ENCODE measurements at regions of chr13 and their contacts with region 1.

Region 1: DNA sequence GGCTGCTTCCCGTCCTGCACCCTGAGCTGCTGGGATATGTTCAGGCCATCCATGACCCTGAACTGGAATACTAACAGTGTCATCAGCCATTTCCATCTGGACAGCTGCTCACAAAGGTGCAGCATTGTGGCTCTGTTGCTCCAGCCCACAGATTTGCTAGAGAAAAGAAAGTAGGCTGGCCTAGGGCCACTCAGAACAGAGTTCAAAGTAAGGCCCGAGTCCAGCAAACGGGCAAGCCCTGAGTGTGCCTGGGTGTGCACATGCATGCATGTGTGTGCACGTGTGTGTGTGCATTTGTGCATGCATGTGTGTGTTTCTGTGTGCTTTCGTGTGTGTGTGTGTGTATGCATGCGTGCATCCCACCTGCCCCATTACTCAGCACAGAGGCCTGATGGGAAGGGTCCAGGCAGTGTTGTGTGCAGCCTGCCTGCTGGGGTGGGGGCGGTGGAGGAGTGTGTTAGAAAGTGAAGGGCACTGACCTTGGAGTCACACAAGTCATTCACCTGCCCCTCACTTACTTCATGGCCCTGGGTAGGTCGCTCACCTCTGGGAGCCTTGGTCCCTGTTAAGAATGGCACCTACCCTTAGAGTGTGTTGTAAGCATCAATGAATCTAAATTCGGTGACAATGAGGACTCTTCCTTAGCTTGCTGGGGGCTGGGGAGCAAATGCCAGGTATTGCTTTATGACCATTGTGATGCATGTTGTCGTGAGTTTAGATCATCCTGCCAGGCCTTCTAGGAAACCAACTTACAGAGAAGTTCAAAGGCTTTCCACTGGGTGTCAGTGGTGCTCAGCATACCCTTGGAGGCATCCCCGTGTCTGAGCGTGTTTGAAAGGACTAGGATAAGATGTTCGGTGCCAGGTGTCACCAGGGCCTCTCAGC is 53.2 kb downstream of the GPR12 start:
- DNase-seq: peak; percentile 74
- ATAC-seq: peak; percentile 78
- H3K4me3 Mint-ChIP-seq: no peak overlapping the region
- H3K27ac Mint-ChIP-seq: no peak overlapping the region
- H3K4me1 Mint-ChIP-seq: peaks cover 6% of the 10 kb centered on the region
- H3K27me3 Mint-ChIP-seq: peaks cover 2% of the 10 kb centered on the region

Region 2: GRCh38 chr13:26721251-26722121 is 14.1 kb after region 1 on chr13:
- CTCF ChIA-PET with region 1: interaction called, 18 read pairs
- POLR2A ChIA-PET with region 1: no interaction called
- DNase-seq: peak; percentile 77
- ATAC-seq: peak; percentile 90
- H3K4me3 Mint-ChIP-seq: peak overlapping the region; percentile 70
- H3K27ac Mint-ChIP-seq: peak overlapping the region; percentile 93
- H3K4me1 Mint-ChIP-seq: peaks cover 30% of the 10 kb centered on the region
- H3K27me3 Mint-ChIP-seq: no peaks in the 10 kb centered on the region

Measured in activated CD8-positive, alpha-beta T cell treated with anti-CD3 and anti-CD28 coated beads, Interleukin-2, amount 10 ng/mL, durations not matched to agents 7 days and 5 days (primary cell).